Heart left ventricle (tissue), 16 donors: ENCODE measurements at regions of chr11 and their contacts with region 1.

Region 1: DNA sequence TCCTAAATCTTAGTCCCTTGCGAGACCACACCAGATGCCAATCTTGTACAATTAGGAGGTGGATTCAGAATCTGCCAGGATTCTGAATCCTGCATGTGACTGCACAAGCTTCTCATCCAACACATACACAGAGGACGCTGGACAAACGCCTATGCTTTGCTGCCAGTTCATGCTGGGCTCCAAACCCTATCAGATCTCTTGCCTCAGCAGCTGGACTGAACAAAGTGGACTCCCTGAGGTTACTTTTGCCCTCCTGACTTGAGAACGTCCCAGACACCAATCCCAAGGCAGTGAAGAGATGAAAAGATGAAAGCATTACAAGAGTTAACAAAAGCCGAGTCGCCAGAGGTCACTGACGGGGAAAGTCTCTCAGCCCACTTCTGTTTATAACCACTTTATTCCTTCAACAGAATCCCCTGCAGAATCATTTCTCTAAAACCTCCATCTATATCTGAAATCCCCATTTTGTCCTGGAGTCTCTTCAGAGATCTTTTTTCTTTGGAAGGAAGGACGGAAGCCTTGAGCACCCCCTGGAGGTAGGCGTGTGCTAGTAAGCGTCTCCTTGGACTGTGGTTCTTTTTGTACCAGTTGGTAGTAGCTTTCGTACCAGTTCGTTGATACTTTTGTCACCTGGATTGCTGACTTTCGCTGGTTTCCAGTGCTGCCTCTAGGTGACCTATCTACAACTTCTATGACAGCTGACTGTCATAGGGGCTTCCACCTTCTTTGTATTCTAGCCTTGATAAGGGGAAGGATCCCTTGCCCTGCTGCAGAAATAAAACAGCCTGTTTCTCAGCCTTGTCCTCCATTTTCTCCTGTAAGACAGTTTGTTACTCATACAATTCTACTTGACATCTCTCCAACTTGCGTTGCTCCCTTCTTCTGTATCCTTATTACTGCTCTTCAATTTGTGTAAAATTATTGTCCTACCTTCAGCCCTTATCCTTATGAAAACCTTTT is 26.1 kb upstream of the EED start:
- DNase-seq: peak; percentile 55 to 68 (median 65)
- ATAC-seq: peak; percentile 74 to 95 (median 92)
- H3K4me3 ChIP-seq: peak overlapping the region in 10 of 12 donors; percentile 22 to 53 (median 38)
- H3K27ac ChIP-seq: peak overlapping the region in 1 of 12 donors; percentile 15
- H3K4me1 ChIP-seq: peaks cover 0 to 19% (median 4%) of the 10 kb centered on the region in 12 donors
- H3K27me3 ChIP-seq: no peaks in the 10 kb centered on the region
- CTCF ChIP-seq: peak; percentile 85 to 95 (median 93)
- POLR2A ChIP-seq: no peak

Region 2: GRCh38 chr11:85867751-85868150 is 350.7 kb before region 1 on chr11:
- intact Hi-C with region 1: loop called in 1 of 10 experiments (anchors 10 kb)
- DNase-seq: no peak
- ATAC-seq: no peak
- H3K4me3 ChIP-seq: no peak overlapping the region
- H3K27ac ChIP-seq: no peak overlapping the region
- H3K4me1 ChIP-seq: no peaks in the 10 kb centered on the region
- H3K27me3 ChIP-seq: no peaks in the 10 kb centered on the region
- CTCF ChIP-seq: no peak
- POLR2A ChIP-seq: no peak

Region 3: DNA sequence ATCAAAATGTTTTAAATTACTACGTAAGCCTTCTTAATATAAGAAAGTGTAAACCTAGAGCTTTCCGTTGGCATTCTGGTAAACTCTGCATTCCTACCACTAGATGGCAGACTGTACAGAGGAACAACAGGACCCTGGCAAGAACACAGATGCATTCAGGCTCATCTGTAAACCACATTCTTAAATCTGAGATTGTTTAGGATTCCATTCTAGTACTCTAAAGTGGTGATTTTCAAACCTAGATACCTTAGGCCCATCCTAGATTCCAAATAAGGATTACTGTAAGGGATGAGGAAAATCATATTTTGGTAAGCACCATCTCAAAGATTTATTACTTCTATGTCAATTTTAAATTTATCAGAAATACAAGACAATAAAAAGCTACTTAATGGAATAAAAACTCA is 176.4 kb before region 1 on chr11:
- intact Hi-C with region 1: loop called in 1 of 10 experiments (anchors 5 kb)
- DNase-seq: peak in 3 of 5 donors; percentile 32 to 79 (median 78)
- ATAC-seq: peak; percentile 80 to 91 (median 84)
- H3K4me3 ChIP-seq: peak overlapping the region in 8 of 12 donors; percentile 16 to 46 (median 26)
- H3K27ac ChIP-seq: peak overlapping the region in 10 of 12 donors; percentile 13 to 75 (median 58)
- H3K4me1 ChIP-seq: peaks cover 0 to 81% (median 57%) of the 10 kb centered on the region in 12 donors
- H3K27me3 ChIP-seq: no peaks in the 10 kb centered on the region
- CTCF ChIP-seq: peak; percentile 82 to 94 (median 89)
- POLR2A ChIP-seq: no peak